Caco-2 (cell line): ENCODE measurements at regions of chr12 and their contacts with region 1.

Region 1: DNA sequence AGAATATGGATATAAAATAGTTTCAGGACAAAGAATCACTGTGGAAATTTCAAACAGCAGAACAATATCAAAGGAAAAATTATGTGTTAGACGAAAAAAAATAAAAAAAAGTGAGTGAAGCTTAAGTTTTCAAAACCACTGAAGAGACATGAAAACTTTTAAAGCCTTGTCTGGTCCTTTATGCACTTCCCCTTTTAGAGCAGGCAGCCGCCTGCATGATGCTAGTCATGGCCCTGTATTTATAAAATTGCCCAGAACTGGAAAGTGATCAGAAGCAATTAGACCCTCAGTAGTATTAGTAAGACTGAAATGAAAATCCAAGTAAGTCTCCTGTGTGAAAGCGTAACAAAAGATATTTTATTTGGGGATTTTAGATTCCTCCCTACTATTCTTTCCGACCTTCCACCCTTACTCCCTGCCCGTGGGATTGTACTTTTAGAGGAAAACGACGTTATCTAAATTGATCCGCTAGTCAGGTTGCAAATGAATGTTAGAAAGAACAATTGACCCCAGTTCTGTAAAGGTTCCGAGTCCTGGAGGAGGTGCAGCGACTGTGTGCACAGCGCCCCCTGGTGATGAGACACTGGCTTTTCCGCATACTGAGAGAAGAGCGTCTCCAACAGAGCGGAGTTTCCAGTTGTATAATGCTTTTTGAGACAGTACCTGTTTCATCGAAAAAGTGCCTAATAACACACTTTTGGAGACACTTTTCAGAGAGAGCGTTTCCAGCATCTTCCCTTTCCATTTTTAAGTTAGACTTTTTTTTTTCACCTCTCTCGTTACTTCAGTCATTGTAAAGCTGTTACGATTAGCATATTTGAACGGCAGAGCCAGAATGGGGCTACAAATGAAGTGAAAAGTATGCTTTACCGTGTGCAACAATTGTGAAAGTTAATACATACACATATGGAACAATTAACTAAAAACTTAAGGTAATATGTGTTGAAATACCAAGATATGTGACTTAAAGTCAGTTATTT is 12.4 kb downstream of the MGST1 start:
- DNase-seq: peak; percentile 79 to 87
- H3K4me3 ChIP-seq: no peak overlapping the region
- H3K4me3 Mint-ChIP-seq: no peak overlapping the region
- H3K27ac Mint-ChIP-seq: no peak overlapping the region
- H3K4me1 ChIP-seq: no peaks in the 10 kb centered on the region
- H3K4me1 Mint-ChIP-seq: no peaks in the 10 kb centered on the region
- H3K27me3 ChIP-seq: no peaks in the 10 kb centered on the region
- H3K27me3 Mint-ChIP-seq: no peaks in the 10 kb centered on the region
- CTCF ChIP-seq: peak; percentile 95 to 98

Region 2: DNA sequence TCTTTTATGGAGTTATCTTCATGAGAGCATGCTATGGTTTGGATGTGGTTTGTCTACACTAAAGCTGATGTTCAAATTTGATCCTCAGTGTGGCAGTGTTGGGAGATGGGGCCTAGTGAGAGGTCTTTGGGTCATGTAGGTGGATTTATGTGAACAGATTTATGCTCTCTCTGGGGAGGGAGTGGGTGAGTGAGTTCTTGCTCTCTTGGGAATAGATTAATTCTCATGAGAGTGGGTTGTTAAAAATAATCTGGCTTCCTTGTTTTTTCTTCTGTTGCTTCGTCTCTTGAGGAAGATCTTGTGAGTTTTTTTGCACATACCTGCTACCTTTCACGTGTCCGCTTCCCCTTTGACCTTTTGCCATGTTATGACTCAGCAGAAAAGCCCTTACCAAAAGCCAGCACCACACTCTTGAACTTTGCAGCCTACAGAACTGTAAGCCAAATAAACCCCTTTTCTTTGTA is 428.2 kb before region 1 on chr12:
- CTCF ChIA-PET with region 1: no interaction called
- POLR2A ChIA-PET with region 1: no interaction called
- intact Hi-C with region 1: no loop called
- DNase-seq: peak in 1 of 2 experiments; percentile 34
- H3K4me3 ChIP-seq: no peak overlapping the region
- H3K4me3 Mint-ChIP-seq: no peak overlapping the region
- H3K27ac Mint-ChIP-seq: peak overlapping the region; percentile 29
- H3K4me1 ChIP-seq: peaks cover 13% of the 10 kb centered on the region
- H3K4me1 Mint-ChIP-seq: peaks cover 20% of the 10 kb centered on the region
- H3K27me3 ChIP-seq: no peaks in the 10 kb centered on the region
- H3K27me3 Mint-ChIP-seq: no peaks in the 10 kb centered on the region
- CTCF ChIP-seq: peak; percentile 9 to 27

Region 3: DNA sequence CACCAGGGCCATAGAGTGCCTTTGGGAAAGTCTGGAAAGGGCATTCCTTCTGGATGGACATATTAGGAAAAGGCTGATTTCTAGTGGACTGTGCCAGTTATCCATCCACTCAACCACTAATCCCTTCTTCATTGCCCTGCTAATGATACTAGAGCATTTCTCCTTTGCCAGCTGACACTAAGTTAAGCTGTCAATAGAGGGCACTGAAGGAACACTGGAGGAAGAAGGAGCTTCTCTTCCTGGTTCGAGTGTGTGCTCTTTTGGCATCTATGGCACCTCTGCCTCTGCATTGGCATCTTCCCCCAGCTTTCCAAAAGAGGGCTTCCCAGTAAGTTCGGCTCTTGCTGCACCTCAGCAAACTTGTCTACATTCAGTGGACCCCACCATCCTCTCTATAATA is 283.2 kb before region 1 on chr12:
- CTCF ChIA-PET with region 1: no interaction called
- POLR2A ChIA-PET with region 1: no interaction called
- intact Hi-C with region 1: loop called (anchors 1 kb)
- DNase-seq: peak in 1 of 2 experiments; percentile 38
- H3K4me3 ChIP-seq: no peak overlapping the region
- H3K4me3 Mint-ChIP-seq: no peak overlapping the region
- H3K27ac Mint-ChIP-seq: no peak overlapping the region
- H3K4me1 ChIP-seq: peaks cover 7% of the 10 kb centered on the region
- H3K4me1 Mint-ChIP-seq: no peaks in the 10 kb centered on the region
- H3K27me3 ChIP-seq: no peaks in the 10 kb centered on the region
- H3K27me3 Mint-ChIP-seq: peaks cover 6% of the 10 kb centered on the region
- CTCF ChIP-seq: peak; percentile 60 to 63

Region 4: DNA sequence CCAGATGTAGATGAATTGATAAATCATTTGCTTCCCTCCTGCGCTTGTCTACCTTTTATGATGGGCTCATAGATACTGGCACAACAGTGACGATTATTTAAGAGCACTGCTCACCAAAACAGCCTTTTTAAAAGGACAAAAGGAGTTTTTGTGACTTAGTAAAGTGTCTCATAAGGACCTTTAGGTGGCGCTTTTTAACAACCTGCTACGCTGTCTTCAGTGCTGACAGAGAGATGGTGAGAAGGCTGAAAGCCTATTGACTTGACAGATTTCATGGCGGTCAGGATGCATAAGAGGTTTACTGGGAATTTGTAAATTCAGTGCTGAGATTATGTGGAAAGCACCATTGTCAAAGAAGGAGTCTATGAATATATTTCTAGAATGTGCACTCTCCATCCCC is 170.0 kb before region 1 on chr12:
- CTCF ChIA-PET with region 1: no interaction called
- POLR2A ChIA-PET with region 1: no interaction called
- intact Hi-C with region 1: loop called (anchors 1 kb)
- DNase-seq: peak; percentile 30 to 41
- H3K4me3 ChIP-seq: no peak overlapping the region
- H3K4me3 Mint-ChIP-seq: no peak overlapping the region
- H3K27ac Mint-ChIP-seq: no peak overlapping the region
- H3K4me1 ChIP-seq: peaks cover 6% of the 10 kb centered on the region
- H3K4me1 Mint-ChIP-seq: peaks cover 5% of the 10 kb centered on the region
- H3K27me3 ChIP-seq: no peaks in the 10 kb centered on the region
- H3K27me3 Mint-ChIP-seq: peaks cover 7% of the 10 kb centered on the region
- CTCF ChIP-seq: peak; percentile 61 to 64

Region 5: GRCh38 chr12:16238661-16239060 is 121.1 kb before region 1 on chr12:
- CTCF ChIA-PET with region 1: no interaction called
- POLR2A ChIA-PET with region 1: no interaction called
- intact Hi-C with region 1: no loop called
- DNase-seq: no peak
- H3K4me3 ChIP-seq: no peak overlapping the region
- H3K4me3 Mint-ChIP-seq: no peak overlapping the region
- H3K27ac Mint-ChIP-seq: no peak overlapping the region
- H3K4me1 ChIP-seq: no peaks in the 10 kb centered on the region
- H3K4me1 Mint-ChIP-seq: no peaks in the 10 kb centered on the region
- H3K27me3 ChIP-seq: no peaks in the 10 kb centered on the region
- H3K27me3 Mint-ChIP-seq: peaks cover 2% of the 10 kb centered on the region
- CTCF ChIP-seq: no peak

Region 6: GRCh38 chr12:16384732-16385131 is 24.9 kb after region 1 on chr12:
- CTCF ChIA-PET with region 1: no interaction called
- POLR2A ChIA-PET with region 1: no interaction called
- intact Hi-C with region 1: no loop called
- DNase-seq: no peak
- H3K4me3 ChIP-seq: no peak overlapping the region
- H3K4me3 Mint-ChIP-seq: no peak overlapping the region
- H3K27ac Mint-ChIP-seq: no peak overlapping the region
- H3K4me1 ChIP-seq: peaks cover 8% of the 10 kb centered on the region; the same call in 1 of the 2 replicates
- H3K4me1 Mint-ChIP-seq: peaks cover 9% of the 10 kb centered on the region
- H3K27me3 ChIP-seq: no peaks in the 10 kb centered on the region
- H3K27me3 Mint-ChIP-seq: peaks cover 2% of the 10 kb centered on the region
- CTCF ChIP-seq: no peak

Region 7: DNA sequence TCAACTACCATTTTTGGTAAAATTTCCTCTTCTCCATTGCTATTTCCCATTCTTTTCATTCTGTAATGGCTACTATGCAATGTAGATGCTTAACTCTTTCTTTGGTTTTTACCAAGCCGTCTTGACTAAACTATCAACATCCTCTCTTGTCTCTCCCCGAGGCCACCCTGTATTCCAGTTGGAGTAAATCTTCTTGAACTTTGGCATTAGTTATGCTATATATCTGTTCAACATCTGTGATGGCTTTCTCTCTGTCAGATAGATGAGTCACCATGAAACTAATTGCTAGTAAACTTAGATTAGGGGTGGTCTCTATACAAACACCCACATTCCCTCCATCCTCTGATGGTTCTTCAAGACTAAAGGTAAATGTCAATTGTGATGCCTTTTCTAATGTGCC is 182.8 kb after region 1 on chr12:
- CTCF ChIA-PET with region 1: no interaction called
- POLR2A ChIA-PET with region 1: no interaction called
- intact Hi-C with region 1: no loop called
- DNase-seq: no peak
- H3K4me3 ChIP-seq: no peak overlapping the region
- H3K4me3 Mint-ChIP-seq: no peak overlapping the region
- H3K27ac Mint-ChIP-seq: no peak overlapping the region
- H3K4me1 ChIP-seq: no peaks in the 10 kb centered on the region
- H3K4me1 Mint-ChIP-seq: no peaks in the 10 kb centered on the region
- H3K27me3 ChIP-seq: no peaks in the 10 kb centered on the region
- H3K27me3 Mint-ChIP-seq: no peaks in the 10 kb centered on the region
- CTCF ChIP-seq: no peak